Activated CD4-positive, alpha-beta memory T cell treated with anti-CD3 and anti-CD28 coated beads for 36 hours (primary cell): ENCODE measurements at regions of chr1 and their contacts with region 1.

Region 1: GRCh38 chr1:212035123-212035834 is at the starts of genes DTL and INTS7:
- DNase-seq: peak; percentile 99
- H3K4me3 Mint-ChIP-seq: peak within 1 kb of the TSS; percentile 97
- H3K27ac Mint-ChIP-seq: peak within 1 kb of the TSS; percentile 99
- H3K4me1 Mint-ChIP-seq: peaks cover 61% of the 10 kb centered on the region
- H3K27me3 Mint-ChIP-seq: peaks cover 2% of the 10 kb centered on the region
- total RNA-seq, gene DTL: 82.2 to 88.2 TPM
- total RNA-seq, gene INTS7: 19.3 to 19.6 TPM

Region 2: DNA sequence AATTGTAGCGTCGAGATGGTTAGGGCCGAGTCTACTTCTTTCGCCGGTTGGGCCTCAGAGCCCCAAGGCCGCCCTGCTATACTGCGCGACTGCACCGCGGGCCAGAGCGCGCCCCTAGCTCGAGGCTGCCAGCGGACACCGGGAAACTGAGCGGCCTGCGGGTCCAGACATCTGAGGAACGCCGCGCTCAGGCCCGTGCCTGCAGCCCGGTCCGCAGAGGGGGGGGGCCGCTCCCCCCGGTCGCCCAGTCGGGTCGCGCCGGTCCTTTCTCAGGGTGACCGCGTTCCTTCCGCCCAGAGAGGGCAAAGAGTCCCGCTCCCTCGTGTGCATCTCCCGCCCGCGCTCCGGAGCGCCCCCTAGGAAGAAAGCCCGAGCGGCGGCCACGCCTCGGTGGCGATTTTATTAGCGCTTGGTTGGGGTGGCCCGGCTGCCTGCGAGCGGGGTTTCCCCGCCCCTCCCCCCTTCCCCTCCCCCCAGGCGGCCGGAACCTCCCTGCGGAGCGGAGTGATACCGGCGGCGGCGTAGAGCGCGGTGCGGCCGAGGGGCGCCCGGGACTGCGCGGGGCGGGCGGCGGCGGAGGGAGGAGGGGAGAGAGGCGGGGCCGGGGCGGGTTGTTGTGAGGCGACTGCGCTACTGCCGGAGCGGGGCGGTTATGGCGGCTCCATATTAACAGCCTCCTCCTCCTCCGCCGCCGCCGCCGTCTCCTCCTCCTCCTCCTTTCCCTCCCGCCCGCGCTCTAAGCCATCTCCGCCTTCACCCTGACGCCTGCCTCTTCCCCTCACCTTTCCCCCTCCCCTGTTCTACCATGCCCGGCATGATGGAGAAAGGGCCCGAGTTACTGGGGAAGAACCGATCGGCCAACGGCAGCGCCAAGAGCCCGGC is 776.3 kb before region 1 on chr1 and contains the start of gene RCOR3:
- CTCF ChIA-PET with region 1: no interaction called
- POLR2A ChIA-PET with region 1: no interaction called
- intact Hi-C with region 1: loop called (anchors 10 kb)
- DNase-seq: peak; percentile 95
- H3K4me3 Mint-ChIP-seq: peak within 1 kb of the TSS; percentile 83
- H3K27ac Mint-ChIP-seq: peak within 1 kb of the TSS; percentile 93
- H3K4me1 Mint-ChIP-seq: peaks cover 16% of the 10 kb centered on the region
- H3K27me3 Mint-ChIP-seq: no peaks in the 10 kb centered on the region
- total RNA-seq, gene RCOR3: 30.2 to 32.7 TPM

Region 3: GRCh38 chr1:211566431-211567025 is 468.8 kb before region 1 on chr1:
- CTCF ChIA-PET with region 1: no interaction called
- POLR2A ChIA-PET with region 1: no interaction called
- intact Hi-C with region 1: no loop called
- DNase-seq: peak; percentile 23
- H3K4me3 Mint-ChIP-seq: no peak overlapping the region
- H3K27ac Mint-ChIP-seq: no peak overlapping the region
- H3K4me1 Mint-ChIP-seq: peaks cover 23% of the 10 kb centered on the region
- H3K27me3 Mint-ChIP-seq: peaks cover 1% of the 10 kb centered on the region

Region 4: GRCh38 chr1:211675230-211676105 is 359.8 kb before region 1 on chr1 and contains the start of gene NEK2:
- CTCF ChIA-PET with region 1: interaction called, 56 read pairs
- POLR2A ChIA-PET with region 1: interaction called, 8 read pairs
- intact Hi-C with region 1: loop called (anchors 1 kb)
- DNase-seq: peak; percentile 94
- H3K4me3 Mint-ChIP-seq: peak within 1 kb of the TSS; percentile 80
- H3K27ac Mint-ChIP-seq: peak within 1 kb of the TSS; percentile 79
- H3K4me1 Mint-ChIP-seq: peaks cover 12% of the 10 kb centered on the region
- H3K27me3 Mint-ChIP-seq: no peaks in the 10 kb centered on the region
- total RNA-seq, gene NEK2: 42.4 to 45.9 TPM

Region 5: DNA sequence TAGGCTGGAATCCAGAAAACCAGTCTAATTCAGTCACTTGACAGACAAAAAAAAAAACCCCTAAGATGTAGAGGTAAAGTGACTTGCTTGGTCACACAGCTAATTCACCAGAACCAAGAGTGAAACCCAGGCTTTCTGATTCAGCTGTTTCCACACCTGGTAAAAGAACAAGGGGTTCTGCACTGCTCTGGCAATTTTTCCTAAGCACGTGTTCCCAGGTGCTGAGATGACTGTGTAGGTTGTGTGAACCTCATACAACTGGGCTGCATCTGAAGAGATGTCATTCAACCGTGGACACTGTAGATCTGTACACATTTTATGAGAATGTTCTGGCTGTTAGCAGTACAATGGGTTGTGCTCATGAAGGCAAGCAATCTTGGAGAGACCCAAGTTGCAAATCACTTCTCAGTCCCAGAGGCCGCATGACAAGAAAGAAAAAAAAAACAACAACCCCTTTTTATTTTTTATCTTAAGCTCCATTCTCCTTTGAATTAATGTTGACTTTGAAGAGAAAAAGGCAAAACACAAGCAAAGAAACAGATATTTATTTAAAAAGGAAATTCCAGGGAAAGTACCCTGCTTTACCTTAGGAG is 95.3 kb before region 1 on chr1:
- CTCF ChIA-PET with region 1: no interaction called
- POLR2A ChIA-PET with region 1: no interaction called
- intact Hi-C with region 1: loop called (anchors 1 kb)
- DNase-seq: peak; percentile 81
- H3K4me3 Mint-ChIP-seq: no peak overlapping the region
- H3K27ac Mint-ChIP-seq: no peak overlapping the region
- H3K4me1 Mint-ChIP-seq: peaks cover 44% of the 10 kb centered on the region
- H3K27me3 Mint-ChIP-seq: no peaks in the 10 kb centered on the region

Region 6: DNA sequence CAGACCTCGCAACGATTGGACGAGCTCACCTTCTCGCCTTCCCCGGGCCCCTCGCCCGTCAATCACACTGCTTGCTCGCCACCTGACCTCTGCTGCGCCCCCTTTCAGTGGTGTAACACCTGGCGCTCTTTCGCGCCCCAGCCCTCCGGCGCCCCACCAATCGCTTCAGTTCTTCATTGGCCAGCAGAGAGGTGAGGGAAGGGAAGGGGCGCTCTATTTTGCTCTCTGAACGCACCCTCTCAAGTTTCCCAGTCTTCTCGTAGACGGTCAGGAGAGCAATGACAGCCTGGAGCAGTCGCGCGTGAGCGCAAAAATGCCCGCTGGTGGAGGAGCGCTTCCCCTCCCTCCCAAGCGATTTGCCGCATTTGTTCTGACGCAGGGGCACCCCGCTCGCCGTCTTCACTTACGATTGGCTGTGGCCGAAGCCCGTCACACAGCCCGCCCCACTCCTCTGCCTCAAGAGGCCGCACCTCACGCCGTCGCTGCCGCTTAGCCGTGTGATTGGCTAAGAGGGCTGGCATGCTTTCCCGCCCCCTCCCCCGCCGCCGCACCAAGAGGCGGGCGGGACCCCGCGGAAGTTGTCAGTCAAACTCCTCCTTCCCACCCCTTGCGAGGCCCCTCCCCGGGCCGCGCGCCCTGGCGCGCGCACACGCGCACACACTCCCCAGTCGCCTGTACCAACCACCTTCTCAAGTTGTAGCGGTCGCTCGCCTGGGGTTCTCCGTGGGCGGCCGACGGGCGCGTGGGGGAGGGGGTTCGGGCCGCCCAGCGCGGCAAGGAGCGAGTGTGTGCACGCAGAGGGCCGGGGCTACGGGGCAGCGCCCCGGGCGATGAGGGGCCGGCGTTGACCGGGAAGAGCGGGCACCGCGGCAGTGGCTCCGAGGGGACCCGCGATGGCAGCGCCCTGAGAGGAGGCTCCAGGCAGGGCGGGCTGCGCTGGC is 249.7 kb after region 1 on chr1 and contains the start of gene PPP2R5A:
- CTCF ChIA-PET with region 1: interaction called, 21 read pairs
- POLR2A ChIA-PET with region 1: interaction called, 14 read pairs
- intact Hi-C with region 1: loop called (anchors 1 kb)
- DNase-seq: peak; percentile 99
- H3K4me3 Mint-ChIP-seq: peak within 1 kb of the TSS; percentile 92
- H3K27ac Mint-ChIP-seq: peak within 1 kb of the TSS; percentile 93
- H3K4me1 Mint-ChIP-seq: peaks cover 31% of the 10 kb centered on the region
- H3K27me3 Mint-ChIP-seq: no peaks in the 10 kb centered on the region
- total RNA-seq, gene PPP2R5A: 38.6 to 40.4 TPM

Region 7: DNA sequence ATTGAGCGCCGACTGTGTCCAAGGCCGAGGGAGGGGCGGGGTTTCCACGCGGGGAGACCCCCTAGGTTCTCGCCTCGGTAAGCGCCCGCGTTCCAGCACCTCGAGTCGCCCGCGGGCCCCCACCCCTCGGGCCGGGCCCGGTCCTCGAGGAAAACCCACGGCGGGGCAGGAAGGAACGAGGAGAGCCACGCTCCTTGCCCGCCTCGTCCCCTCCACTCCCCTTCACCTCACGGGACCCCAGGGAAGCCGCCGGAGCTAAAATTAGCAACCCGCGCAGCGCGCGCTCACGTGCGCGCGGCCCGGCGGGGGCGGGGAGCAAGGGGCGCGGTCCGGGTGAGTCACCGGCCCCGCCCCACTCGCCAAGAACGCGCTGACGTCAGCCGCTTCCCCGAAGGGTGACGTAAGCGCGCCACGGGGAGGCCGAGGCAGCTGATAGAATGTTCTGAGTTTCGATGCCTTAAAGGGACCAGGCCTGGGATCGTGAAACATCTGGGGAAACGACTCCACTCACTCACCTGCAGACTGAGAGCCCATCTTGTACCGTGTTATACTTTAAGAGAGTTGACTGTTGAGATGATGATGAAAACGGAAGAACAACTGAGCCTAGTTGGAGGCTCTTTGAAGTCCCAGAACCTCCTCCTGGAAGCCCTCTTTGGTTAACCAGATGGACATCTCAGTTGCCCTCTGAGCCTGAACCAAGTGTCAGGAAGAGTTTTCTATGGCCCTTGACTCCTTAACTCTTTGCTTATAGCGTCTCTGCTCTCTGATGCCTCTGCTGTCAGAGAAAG is 523.6 kb after region 1 on chr1:
- CTCF ChIA-PET with region 1: no interaction called
- POLR2A ChIA-PET with region 1: no interaction called
- intact Hi-C with region 1: loop called (anchors 5 kb)
- DNase-seq: peak; percentile 93
- H3K4me3 Mint-ChIP-seq: peak overlapping the region; percentile 45
- H3K27ac Mint-ChIP-seq: peak overlapping the region; percentile 83
- H3K4me1 Mint-ChIP-seq: peaks cover 15% of the 10 kb centered on the region
- H3K27me3 Mint-ChIP-seq: peaks cover 7% of the 10 kb centered on the region

Region 8: DNA sequence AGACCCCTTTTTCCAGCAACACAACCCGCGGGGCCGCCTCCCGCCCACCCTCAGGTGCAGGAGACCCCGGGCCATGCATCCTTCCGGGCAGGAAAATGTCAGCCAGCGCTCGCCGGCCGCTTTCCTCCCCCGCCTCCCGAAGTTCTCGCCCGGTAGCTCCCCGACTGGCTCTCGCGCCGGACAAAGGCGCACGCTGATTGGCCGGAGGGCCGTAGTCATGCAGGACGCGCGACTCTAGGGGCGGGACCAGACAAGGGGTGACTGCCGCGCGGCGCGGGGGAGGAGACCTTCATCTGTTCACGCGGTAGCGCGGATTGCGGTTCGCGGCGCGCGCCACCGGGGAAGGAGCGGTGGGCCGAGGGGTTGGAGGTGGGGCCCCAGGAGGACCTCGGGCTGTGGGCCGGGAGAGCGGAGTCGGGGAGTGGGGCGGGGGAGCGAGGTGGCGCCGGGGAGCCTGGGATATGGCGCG is 822.7 kb after region 1 on chr1 and contains the start of gene FLVCR1:
- CTCF ChIA-PET with region 1: no interaction called
- POLR2A ChIA-PET with region 1: no interaction called
- intact Hi-C with region 1: loop called (anchors 10 kb)
- DNase-seq: peak; percentile 98
- H3K4me3 Mint-ChIP-seq: peak within 1 kb of the TSS; percentile 96
- H3K27ac Mint-ChIP-seq: peak within 1 kb of the TSS; percentile 93
- H3K4me1 Mint-ChIP-seq: peaks cover 20% of the 10 kb centered on the region
- H3K27me3 Mint-ChIP-seq: no peaks in the 10 kb centered on the region
- total RNA-seq, gene FLVCR1: 12.4 to 12.6 TPM